Activated naive CD4-positive, alpha-beta T cell treated with anti-CD3 and anti-CD28 coated beads for 36 hours (primary cell): ENCODE measurements at regions of chr10 and their contacts with region 1.

Region 1: DNA sequence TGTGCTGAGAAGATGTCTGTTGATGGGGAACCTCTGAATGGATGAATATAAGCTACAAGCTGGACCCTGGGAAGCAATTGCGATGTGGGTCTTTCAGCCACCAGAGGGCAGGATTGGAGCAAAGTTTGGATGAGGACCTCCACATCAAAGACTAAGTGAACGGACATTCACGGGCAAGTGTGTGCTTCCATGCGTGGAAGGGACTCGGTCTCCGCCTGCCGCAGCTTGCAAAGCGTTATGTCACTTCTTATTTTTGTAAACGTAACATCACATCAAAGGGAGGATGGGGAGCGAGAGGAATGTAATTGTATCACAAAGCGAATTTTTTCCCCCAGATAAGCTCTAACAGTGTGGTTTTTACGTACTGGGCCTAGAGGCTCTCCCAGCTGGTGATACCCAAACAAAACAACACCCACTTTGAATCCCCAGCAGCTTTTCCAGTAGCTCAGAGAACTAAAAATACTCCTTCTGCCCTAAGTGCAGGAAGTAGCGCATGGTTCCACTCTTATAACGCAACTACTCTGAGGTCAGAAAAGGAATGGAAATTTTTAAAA is 65.0 kb downstream of the VWA2 start:
- DNase-seq: peak; percentile 90
- H3K4me3 Mint-ChIP-seq: peak overlapping the region; percentile 81
- H3K27ac Mint-ChIP-seq: no peak overlapping the region
- H3K4me1 Mint-ChIP-seq: peaks cover 3% of the 10 kb centered on the region
- H3K27me3 Mint-ChIP-seq: no peaks in the 10 kb centered on the region

Region 2: GRCh38 chr10:113808168-113808567 is 495.9 kb before region 1 on chr10:
- CTCF ChIA-PET with region 1: no interaction called
- intact Hi-C with region 1: no loop called
- DNase-seq: no peak
- H3K4me3 Mint-ChIP-seq: no peak overlapping the region
- H3K27ac Mint-ChIP-seq: no peak overlapping the region
- H3K4me1 Mint-ChIP-seq: no peaks in the 10 kb centered on the region
- H3K27me3 Mint-ChIP-seq: peaks cover 20% of the 10 kb centered on the region

Region 3: GRCh38 chr10:114327537-114328440 is 23.7 kb after region 1 on chr10:
- CTCF ChIA-PET with region 1: interaction called, 17 read pairs
- intact Hi-C with region 1: no loop called
- DNase-seq: no peak
- H3K4me3 Mint-ChIP-seq: no peak overlapping the region
- H3K27ac Mint-ChIP-seq: no peak overlapping the region
- H3K4me1 Mint-ChIP-seq: no peaks in the 10 kb centered on the region
- H3K27me3 Mint-ChIP-seq: no peaks in the 10 kb centered on the region

Region 4: GRCh38 chr10:114437456-114438292 is 133.6 kb after region 1 on chr10:
- CTCF ChIA-PET with region 1: interaction called, 15 read pairs
- intact Hi-C with region 1: loop called (anchors 1 kb)
- DNase-seq: no peak
- H3K4me3 Mint-ChIP-seq: no peak overlapping the region
- H3K27ac Mint-ChIP-seq: no peak overlapping the region
- H3K4me1 Mint-ChIP-seq: no peaks in the 10 kb centered on the region
- H3K27me3 Mint-ChIP-seq: no peaks in the 10 kb centered on the region

Region 5: DNA sequence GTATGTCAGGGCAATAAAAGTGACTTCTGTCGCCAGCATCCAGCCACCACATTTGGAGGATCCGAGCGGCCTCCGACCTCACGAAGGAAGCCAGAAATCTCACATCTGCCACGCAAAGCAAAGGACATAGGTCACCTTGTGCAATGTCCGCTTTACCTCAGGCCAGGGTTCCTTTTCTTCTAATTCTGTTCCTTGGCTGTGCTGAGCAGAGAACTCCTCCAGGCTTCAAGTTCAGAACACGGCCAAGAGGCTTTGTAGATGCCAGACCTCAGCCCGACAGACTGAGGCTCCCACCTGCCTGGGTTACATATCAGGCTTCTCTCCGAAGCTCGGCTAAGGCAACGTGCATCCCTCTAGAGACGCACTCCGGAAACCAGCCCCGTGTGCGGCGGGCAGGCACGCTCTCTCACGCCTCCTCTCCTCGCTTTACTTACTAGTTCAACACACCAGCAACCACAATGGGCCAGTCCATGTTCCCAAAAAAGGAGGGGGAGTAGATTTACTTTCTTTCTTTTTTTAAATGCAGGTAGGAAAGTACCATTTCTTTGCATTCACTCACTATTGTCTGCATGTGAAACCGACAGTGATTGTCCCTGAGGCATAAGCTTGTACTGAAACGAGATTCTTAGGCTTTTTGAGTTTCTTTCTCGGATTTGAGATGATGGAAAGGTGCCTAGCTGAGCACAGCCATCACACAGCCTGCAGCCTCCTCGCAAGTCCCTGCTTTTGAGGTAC is 222.6 kb after region 1 on chr10:
- CTCF ChIA-PET with region 1: interaction called, 11 read pairs
- intact Hi-C with region 1: no loop called
- DNase-seq: peak; percentile 95
- H3K4me3 Mint-ChIP-seq: peak overlapping the region; percentile 94
- H3K27ac Mint-ChIP-seq: peak overlapping the region; percentile 99
- H3K4me1 Mint-ChIP-seq: peaks cover 47% of the 10 kb centered on the region
- H3K27me3 Mint-ChIP-seq: no peaks in the 10 kb centered on the region

Region 6: GRCh38 chr10:114703377-114704107 is 399.4 kb after region 1 on chr10:
- CTCF ChIA-PET with region 1: interaction called, 17 read pairs
- intact Hi-C with region 1: loop called (anchors 1 kb)
- DNase-seq: peak; percentile 11
- H3K4me3 Mint-ChIP-seq: no peak overlapping the region
- H3K27ac Mint-ChIP-seq: no peak overlapping the region
- H3K4me1 Mint-ChIP-seq: no peaks in the 10 kb centered on the region
- H3K27me3 Mint-ChIP-seq: peaks cover 12% of the 10 kb centered on the region

Region 7: DNA sequence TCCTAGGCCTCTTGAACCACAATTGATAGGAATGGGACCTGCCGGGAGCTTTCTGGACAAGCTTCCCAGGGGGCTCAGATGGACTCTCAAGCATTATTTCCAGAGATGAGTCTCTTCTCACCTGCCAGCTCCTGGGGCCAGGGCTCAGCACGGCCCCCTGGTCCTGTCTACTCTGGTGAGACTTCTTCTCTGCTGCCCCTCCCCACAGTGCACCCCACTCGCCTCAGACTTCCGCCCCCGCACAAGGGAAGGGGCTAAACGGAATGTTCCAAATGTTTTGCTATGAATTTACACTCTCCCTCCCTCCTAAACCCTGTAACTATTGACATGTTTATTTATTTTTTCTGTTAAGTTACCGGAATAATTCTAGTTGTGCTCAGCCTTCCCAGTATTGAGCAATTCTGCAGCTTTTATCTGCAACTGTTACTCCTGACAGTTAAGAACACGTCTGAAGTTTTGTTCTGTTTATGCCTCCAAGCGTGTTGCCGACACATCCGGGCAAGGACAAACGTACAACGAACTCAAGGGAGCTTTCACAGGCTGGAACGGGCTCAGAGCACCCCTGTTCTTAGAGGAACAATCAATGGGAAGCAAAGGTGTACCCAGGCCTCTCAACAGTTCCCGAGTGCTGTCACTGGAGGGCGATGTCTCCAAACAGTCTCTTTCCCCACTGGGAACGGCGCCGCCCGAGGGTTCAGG is 572.7 kb after region 1 on chr10:
- CTCF ChIA-PET with region 1: no interaction called
- intact Hi-C with region 1: loop called (anchors 1 kb)
- DNase-seq: peak; percentile 74
- H3K4me3 Mint-ChIP-seq: no peak overlapping the region
- H3K27ac Mint-ChIP-seq: no peak overlapping the region
- H3K4me1 Mint-ChIP-seq: peaks cover 5% of the 10 kb centered on the region
- H3K27me3 Mint-ChIP-seq: peaks cover 36% of the 10 kb centered on the region